ENCODE measurements at regions of chr4 and their contacts with region 1.

Region 1: GRCh38 chr4:27318743-27319142 is 458.1 kb downstream of the STIM2 start:
- DNase-seq: no peak
- H3K4me3 ChIP-seq: no peak overlapping the region
- H3K27me3 ChIP-seq: no peaks in the 10 kb centered on the region
- CTCF ChIP-seq: peak; percentile 63

Region 2: GRCh38 chr4:27048429-27049238 is 270.1 kb before region 1 on chr4:
- CTCF ChIA-PET with region 1: interaction called, 30 read pairs
- POLR2A ChIA-PET with region 1: no interaction called
- DNase-seq: no peak
- H3K4me3 ChIP-seq: peak overlapping the region; percentile 13; the same call in 1 of the 2 replicates
- H3K27me3 ChIP-seq: peaks cover 12% of the 10 kb centered on the region
- CTCF ChIP-seq: peak; percentile 62

Region 3: DNA sequence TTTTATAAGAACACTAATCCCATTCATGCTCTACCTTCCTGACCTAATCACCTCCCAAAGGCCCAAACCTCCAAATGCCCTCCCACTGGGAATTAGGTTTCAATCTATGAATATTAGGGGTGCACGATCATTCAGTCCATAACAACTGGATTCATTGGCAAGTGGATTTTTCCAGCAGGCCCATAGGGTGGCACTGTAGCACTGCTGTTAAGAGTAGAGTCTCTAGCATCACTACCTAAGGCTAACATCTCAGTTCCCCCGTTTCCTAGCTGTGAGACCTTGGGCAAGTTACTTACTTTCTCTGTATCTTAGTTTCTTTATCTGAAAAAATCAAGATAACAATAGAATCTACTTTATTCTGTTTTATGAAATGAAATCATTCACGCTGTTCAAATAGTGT is 142.3 kb before region 1 on chr4:
- CTCF ChIA-PET with region 1: interaction called, 52 read pairs
- POLR2A ChIA-PET with region 1: no interaction called
- DNase-seq: no peak
- H3K4me3 ChIP-seq: no peak overlapping the region
- H3K27me3 ChIP-seq: 0 out of 2 replicates have a peak, but pooled peaks cover 2% of the 10 kb centered on the region
- CTCF ChIP-seq: peak; percentile 65

Region 4: GRCh38 chr4:27276307-27277073 is 42.3 kb before region 1 on chr4:
- CTCF ChIA-PET with region 1: no interaction called
- POLR2A ChIA-PET with region 1: no interaction called
- DNase-seq: no peak
- H3K4me3 ChIP-seq: no peak overlapping the region
- H3K27me3 ChIP-seq: no peaks in the 10 kb centered on the region
- CTCF ChIP-seq: no peak

Region 5: GRCh38 chr4:27308379-27308778 is 10.4 kb before region 1 on chr4:
- CTCF ChIA-PET with region 1: interaction called, 11 read pairs
- POLR2A ChIA-PET with region 1: interaction called, 5 read pairs
- DNase-seq: no peak
- H3K4me3 ChIP-seq: no peak overlapping the region
- H3K27me3 ChIP-seq: no peaks in the 10 kb centered on the region
- CTCF ChIP-seq: no peak

Measured in BJ (cell line).